AG04450 (cell line): ENCODE measurements at regions of chr3 and their contacts with region 1.

Region 1: DNA sequence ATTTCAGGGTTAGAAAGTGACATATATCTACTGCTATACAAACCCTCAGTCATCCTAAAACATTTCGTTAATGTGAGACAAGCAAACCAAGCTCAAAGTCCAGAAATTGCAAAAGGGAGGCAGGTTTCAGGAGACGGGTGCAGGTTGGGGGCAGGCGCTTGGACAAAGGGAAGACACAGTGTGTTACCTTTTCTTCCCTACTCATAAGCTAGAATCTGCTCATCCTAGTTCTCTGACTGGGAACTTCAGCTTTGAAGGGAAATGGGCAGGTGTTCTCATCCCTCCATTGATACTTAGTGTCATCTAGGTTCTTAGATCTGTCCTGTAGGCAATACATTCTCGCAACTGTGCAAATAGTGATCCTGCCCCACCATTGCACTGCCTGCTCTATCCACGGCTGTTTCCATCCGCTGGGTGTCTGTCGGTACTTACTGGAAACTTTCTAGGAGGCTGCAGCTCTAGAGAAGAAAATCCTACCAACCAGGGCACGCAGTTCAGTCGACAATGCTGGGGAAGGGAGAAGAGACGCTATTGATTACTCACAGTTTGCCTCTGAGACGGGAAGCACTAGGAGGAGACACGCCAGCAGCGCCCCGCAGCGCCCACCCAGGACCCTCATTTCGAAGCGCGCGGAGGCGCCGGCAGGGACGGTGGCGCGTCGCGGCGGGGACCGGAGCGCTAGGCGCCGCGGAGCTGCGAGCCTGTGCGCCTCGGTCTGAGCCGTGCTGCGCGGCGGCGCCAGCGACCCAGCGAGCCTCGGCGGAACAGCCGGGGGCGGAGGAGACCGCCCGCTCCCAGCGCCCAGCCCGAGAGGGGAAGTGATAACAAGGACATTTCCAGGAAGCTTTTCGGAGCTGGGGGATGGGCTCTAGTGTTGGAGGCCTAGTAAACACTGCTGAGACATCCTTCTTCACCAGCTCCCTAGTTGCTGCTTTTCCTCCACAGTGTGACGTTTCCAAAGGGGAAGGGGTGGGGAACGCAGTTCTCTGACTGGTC is at the start of gene PROS1:
- DNase-seq: no peak
- H3K4me3 ChIP-seq: peak within 1 kb of the TSS; percentile 71
- H3K27ac ChIP-seq: peak within 1 kb of the TSS; percentile 72
- H3K27me3 ChIP-seq: no peaks in the 10 kb centered on the region
- CTCF ChIP-seq: no peak
- polyA plus RNA-seq, gene PROS1: 9.3 and 11.5 TPM in 2 replicates

Region 2: DNA sequence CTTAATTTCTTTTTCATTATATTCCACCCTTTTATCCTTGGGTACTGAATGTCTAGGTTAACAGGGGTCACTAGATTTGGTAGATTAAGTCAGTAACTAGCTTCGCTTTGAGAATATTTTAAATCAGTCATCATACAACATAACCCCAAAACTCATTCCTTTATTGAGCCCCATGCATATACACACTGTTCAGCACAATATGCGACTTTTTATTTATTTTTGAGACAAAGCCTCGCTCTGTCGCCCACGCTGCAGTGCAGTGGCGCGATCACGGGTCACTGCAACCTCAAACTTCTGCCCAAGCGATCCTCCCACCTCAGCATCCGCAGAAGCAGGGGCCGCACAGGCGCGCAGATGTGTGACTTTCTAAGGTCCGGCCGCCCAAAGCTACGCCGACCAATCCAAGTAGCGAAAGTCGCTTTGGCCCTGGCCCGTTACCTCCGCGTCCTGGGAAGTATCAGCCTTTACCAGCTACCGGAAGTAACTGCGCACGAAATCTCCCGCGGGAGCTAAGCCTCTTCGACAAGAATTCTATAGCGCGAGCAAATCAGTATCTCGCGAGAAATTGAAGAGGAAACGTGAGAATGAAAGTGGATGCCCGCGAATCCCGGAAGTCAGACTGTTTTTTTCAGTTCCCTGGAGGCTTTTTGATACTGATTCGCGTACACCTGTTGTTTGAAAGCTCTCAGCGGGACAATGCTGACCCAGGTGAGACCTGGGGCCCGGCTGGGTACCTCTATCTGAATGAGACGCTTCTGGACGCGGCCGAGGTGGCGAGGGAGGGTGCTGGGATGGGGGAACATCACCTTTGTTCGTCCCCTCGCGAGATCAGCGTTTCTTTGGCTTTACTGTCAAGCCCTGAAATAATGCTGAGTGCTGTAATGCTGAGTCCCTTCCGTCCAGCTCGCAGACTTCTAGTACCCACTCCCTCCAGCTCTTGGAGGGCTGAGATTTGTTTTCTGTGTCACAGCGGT is 89.3 kb after region 1 on chr3 and contains the starts of genes DHFR2 and NSUN3:
- CTCF ChIA-PET with region 1: no interaction called
- POLR2A ChIA-PET with region 1: interaction called, 10 read pairs
- DNase-seq: peak; percentile 96
- H3K4me3 ChIP-seq: peak within 1 kb of the TSS; percentile 87
- H3K27ac ChIP-seq: peak within 1 kb of the TSS; percentile 99
- H3K27me3 ChIP-seq: no peaks in the 10 kb centered on the region
- CTCF ChIP-seq: no peak
- polyA plus RNA-seq, gene DHFR2: 3.4 and 4.0 TPM in 2 replicates
- polyA plus RNA-seq, gene NSUN3: 7.5 and 7.7 TPM in 2 replicates

Region 3: GRCh38 chr3:94127115-94127514 is 153.7 kb after region 1 on chr3:
- CTCF ChIA-PET with region 1: no interaction called
- POLR2A ChIA-PET with region 1: no interaction called
- DNase-seq: no peak
- H3K4me3 ChIP-seq: no peak overlapping the region
- H3K27ac ChIP-seq: no peak overlapping the region
- H3K27me3 ChIP-seq: no peaks in the 10 kb centered on the region
- CTCF ChIP-seq: no peak